ENCODE measurements at regions of chr16 and their contacts with region 1.

Region 1: DNA sequence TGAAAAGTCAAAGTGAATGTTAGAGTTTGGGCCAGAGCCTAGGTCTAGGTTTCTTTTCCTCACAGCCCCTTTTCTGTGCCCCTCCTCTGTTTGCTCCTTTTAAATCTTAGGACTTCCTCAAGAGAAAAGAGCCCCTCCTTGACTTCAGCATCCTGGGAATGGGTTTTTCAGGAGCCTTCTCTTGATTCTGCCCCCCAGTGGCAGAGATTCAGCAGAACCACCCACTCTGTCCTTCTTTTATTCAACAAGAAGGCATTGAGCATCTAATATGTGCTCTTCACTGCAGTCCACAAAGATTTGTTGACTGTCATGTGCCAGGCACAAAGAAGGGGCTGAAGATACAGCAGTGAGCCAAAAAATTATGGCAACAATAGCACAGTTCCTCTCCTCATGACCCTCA is 270.8 kb upstream of the CDH5 start:
- DNase-seq: no peak
- H3K4me3 ChIP-seq: no peak overlapping the region
- CTCF ChIP-seq: no peak
- POLR2A ChIP-seq: no peak

Region 2: DNA sequence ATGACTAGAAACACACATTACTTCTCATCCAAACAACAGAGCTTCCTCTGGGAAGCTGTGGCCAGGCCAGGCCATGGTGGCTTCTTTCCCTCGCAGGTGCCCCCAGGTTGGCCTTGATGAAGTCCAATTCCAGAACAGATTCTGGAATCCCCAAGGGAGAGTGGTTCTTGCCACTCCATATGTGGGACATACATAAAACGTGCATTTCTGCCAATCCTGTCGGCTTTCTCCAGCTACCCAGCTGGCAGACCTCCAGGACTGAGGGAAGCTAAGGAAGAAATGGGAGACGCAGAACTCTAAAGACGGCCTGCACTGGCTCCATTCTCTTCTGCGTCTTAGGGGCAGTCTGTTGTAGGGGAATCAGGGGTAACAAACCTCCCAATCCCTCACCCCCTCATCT is 51.6 kb after region 1 on chr16:
- intact Hi-C with region 1: loop called (anchors 5 kb)
- DNase-seq: no peak
- H3K4me3 ChIP-seq: no peak overlapping the region
- CTCF ChIP-seq: no peak
- POLR2A ChIP-seq: no peak